Right ventricle myocardium inferior (tissue), 1 donor: ENCODE measurements at regions of chr15 and their contacts with region 1.

Region 1: GRCh38 chr15:40274350-40275274 is 8.3 kb downstream of the ANKRD63 start:
- DNase-seq: peak; percentile 93
- ATAC-seq: peak; percentile 63

Region 2: GRCh38 chr15:40038638-40039543 is 235.7 kb before region 1 on chr15 and contains the start of gene SRP14:
- intact Hi-C with region 1: loop called (anchors 1 kb)
- DNase-seq: peak; percentile 97
- ATAC-seq: peak; percentile 98
- total RNA-seq, gene SRP14: 232 TPM

Region 3: GRCh38 chr15:40204100-40204499 is 70.5 kb before region 1 on chr15:
- intact Hi-C with region 1: no loop called
- DNase-seq: no peak
- ATAC-seq: no peak

Region 4: GRCh38 chr15:40217159-40217824 is 57.3 kb before region 1 on chr15:
- intact Hi-C with region 1: loop called (anchors 1 kb)
- DNase-seq: no peak
- ATAC-seq: peak; percentile 80

Region 5: DNA sequence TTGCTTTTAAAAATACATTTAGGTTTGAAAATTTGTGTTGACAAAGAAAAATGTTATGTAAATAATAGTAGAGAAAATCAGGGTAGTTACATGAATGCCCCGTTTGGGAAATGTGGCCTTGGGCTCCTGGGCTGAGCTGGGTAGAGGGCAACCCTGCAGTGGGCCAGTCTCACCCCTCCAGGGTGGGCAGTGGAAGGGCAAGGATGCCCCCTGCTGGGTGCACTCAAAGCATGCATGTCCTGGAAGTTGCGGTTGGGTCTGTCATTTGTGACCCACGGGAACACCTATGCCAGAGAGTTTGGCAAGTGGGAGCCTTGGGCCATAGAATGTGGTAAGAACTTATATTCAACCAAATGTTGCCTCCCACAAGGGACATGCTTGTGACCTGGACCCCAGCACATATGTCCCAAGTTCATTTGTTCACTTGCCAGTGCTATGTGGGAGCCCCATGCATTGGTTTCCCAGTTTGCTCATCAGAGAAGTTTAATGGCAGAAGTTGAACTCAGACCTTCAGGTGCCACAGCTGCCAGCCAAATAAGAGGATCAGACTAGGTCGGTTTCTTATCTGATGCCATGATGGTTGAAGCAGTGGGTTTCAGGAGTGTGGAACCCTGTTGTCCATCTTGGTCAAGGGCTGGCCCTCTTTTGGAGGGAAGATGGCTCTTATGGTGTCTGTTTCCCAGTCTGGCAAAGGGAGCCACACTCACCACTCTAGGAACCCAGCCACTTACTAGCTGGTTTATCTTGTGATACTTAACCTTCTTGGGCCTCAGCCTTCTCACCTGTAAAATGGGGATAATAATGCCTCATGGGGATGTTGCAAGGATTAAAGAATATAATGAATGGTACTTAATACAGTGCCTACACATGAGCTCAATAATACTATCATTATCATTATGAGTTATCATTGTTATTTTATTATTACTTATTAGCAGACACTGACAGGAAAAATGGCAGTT is 35.7 kb after region 1 on chr15:
- intact Hi-C with region 1: loop called (anchors 1 kb)
- DNase-seq: peak; percentile 81
- ATAC-seq: peak; percentile 74

Region 6: GRCh38 chr15:40421246-40422157 is 146.9 kb after region 1 on chr15:
- intact Hi-C with region 1: loop called (anchors 1 kb)
- DNase-seq: peak; percentile 93
- ATAC-seq: peak; percentile 92